Astrocyte of the cerebellum (primary cell): ENCODE measurements at regions of chr18 and their contacts with region 1.

Region 1: DNA sequence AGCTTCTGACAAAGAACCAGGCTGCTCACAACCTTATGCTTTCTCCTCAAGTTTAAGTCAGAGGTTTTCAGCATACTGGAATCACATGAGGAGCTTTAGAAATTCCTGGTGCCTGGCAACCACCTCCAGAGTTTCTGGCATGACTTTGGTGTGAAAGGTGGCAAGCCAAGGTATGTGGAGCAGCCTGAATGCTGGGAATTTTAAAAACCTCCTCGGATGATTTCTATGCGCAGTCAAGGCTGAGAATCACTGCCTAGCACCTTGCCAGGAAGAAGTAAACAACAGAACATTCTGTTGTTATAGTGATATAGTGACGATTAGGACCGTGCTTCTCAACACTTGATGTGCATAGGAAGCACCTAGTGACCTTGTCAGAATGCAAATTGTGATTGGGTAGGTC is 11.7 kb downstream of the CCBE1 start:
- DNase-seq: no peak
- H3K4me3 ChIP-seq: no peak overlapping the region
- CTCF ChIP-seq: no peak

Region 2: GRCh38 chr18:59606193-59607077 is 79.1 kb before region 1 on chr18:
- in situ Hi-C with region 1: no loop called
- DNase-seq: peak; percentile 28
- H3K4me3 ChIP-seq: no peak overlapping the region
- CTCF ChIP-seq: no peak

Region 3: GRCh38 chr18:59646228-59646962 is 39.1 kb before region 1 on chr18:
- in situ Hi-C with region 1: loop called (anchors 5 kb)
- DNase-seq: no peak
- H3K4me3 ChIP-seq: no peak overlapping the region
- CTCF ChIP-seq: no peak